Activated B cell treated with CpG ODN at 0.5 μM for 24 hours (primary cell): ENCODE measurements at regions of chr20 and their contacts with region 1.

Region 1: DNA sequence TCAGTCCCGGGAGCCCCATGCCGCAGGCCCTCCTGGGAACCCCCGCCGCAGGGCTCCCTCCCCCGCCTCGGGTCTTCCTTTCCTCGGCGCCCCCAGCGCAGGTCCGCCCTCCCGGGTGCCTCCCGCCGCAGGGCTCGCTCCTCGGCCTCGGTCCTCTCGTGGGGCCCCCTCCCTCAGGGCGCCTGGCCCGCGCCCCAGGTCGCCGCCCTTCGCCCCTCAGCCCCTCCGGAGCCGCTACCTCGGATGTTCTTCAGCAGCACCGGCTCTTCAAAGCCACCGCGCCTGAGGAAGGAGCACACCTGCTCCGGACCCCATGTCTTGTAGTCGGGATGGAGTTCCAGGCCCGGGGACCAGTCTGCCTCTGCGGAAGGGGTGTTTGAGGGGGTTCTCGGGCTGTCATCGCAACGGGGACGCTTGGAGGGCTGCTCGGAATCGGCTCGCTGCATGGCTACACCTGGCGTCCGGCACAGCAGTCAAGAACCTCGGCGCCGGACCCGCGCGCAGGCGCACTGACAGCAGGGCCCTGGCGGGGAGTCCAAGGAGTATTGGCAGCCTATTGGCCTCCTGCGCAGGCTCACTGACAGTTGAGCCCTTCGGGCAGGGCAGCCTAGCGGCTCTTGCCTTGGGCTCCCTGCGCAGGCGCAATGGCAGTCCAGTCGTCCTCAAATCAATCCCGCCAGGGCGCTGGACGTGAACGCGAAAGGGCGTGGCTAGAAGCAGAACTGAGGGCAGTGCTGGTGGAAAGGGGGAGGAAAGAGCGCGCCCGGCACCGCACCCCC is at the start of gene SAMHD1:
- DNase-seq: peak; percentile 85
- ATAC-seq: peak; percentile 97
- H3K4me3 Mint-ChIP-seq: peak within 1 kb of the TSS; percentile 96
- H3K27ac Mint-ChIP-seq: peak within 1 kb of the TSS; percentile 81
- H3K4me1 Mint-ChIP-seq: peaks cover 24% of the 10 kb centered on the region
- H3K27me3 Mint-ChIP-seq: no peaks in the 10 kb centered on the region
- CTCF ChIP-seq: no peak
- total RNA-seq, gene SAMHD1: 15.1 and 16.4 TPM in 2 replicates

Region 2: DNA sequence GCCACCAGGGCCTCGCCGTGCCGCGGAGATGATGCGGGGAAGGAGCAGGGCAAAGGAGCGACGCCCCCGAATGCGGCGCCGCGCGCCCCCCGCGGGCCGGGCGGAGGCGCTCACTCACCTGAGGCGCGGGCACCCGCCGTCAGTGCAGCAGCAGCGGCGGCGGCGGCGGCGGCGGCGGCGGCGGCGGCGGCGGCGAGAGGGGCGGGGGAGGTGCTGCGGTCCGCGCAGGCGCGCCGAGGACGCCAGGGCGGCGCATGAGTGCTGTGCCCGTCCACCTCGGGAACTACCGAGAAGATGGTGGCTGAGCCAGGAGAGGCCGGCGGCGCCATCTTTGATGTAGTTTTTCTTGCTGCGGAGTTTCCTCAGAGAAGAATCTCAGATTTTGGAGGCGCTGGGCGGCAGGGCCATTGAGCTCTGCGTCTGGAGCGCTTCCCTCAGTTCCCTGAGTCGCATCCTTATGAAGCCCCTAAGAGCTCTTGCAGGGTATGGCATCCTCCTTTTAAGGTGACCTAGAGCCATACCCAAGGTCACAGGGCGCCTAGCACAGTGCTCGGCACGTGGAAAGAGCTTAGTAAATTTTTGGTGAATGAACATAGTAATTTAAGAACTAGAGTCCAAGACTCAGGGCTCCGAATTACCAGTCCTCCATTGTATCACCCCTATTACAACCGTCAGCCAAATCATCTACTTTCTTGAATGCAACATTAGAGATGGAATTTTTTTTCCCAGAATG is 205.3 kb before region 1 on chr20 and contains the start of gene NDRG3:
- CTCF ChIA-PET with region 1: no interaction called
- POLR2A ChIA-PET with region 1: no interaction called
- intact Hi-C with region 1: loop called (anchors 1 kb)
- DNase-seq: peak; percentile 84
- ATAC-seq: peak; percentile 98
- H3K4me3 Mint-ChIP-seq: peak within 1 kb of the TSS; percentile 87
- H3K27ac Mint-ChIP-seq: peak within 1 kb of the TSS; percentile 88
- H3K4me1 Mint-ChIP-seq: peaks cover 16% of the 10 kb centered on the region
- H3K27me3 Mint-ChIP-seq: no peaks in the 10 kb centered on the region
- CTCF ChIP-seq: no peak
- total RNA-seq, gene NDRG3: 20.8 and 21.4 TPM in 2 replicates

Region 3: DNA sequence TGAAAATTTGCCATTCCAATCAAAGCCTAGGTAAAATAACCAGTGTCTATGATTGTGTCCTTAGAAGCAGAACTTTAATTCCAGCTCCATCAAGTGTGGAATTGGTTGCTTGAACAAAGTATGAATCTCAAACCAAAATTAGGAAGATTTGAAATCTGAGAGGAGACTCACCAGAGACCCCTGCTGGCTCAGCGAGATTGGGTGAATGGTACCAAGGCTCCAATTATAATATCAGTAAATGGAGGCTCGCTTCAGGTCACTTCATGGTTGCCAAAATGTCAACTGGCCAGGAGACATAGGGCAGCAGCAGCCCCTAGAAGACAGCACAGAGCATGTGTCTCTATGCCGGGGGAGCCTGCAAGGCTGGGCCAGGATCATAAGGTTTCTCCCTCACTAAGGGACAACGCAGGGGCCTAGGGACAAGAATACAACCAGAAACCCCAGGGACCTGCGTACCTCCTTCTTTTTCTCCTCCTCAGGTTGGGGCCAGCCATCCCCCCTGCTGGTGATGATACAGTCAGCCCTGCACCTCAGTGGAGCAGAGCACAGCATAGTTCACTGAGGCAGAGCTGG is 130.4 kb after region 1 on chr20:
- CTCF ChIA-PET with region 1: no interaction called
- POLR2A ChIA-PET with region 1: no interaction called
- intact Hi-C with region 1: loop called (anchors 1 kb)
- DNase-seq: no peak
- ATAC-seq: peak; percentile 45
- H3K4me3 Mint-ChIP-seq: no peak overlapping the region
- H3K27ac Mint-ChIP-seq: no peak overlapping the region
- H3K4me1 Mint-ChIP-seq: peaks cover 2% of the 10 kb centered on the region
- H3K27me3 Mint-ChIP-seq: no peaks in the 10 kb centered on the region
- CTCF ChIP-seq: no peak